Ascending aorta (tissue), 2 donors: ENCODE measurements at regions of chr1 and their contacts with region 1.

Region 1: GRCh38 chr1:55632058-55632457 is 416.9 kb upstream of the USP24 start:
- DNase-seq: no peak
- H3K4me3 ChIP-seq: no peak overlapping the region
- H3K27ac ChIP-seq: peak overlapping the region; percentile 63 to 66
- H3K4me1 ChIP-seq: peaks cover 20 to 42% of the 10 kb centered on the region in 2 donors
- H3K27me3 ChIP-seq: no peaks in the 10 kb centered on the region
- CTCF ChIP-seq: no peak

Region 2: DNA sequence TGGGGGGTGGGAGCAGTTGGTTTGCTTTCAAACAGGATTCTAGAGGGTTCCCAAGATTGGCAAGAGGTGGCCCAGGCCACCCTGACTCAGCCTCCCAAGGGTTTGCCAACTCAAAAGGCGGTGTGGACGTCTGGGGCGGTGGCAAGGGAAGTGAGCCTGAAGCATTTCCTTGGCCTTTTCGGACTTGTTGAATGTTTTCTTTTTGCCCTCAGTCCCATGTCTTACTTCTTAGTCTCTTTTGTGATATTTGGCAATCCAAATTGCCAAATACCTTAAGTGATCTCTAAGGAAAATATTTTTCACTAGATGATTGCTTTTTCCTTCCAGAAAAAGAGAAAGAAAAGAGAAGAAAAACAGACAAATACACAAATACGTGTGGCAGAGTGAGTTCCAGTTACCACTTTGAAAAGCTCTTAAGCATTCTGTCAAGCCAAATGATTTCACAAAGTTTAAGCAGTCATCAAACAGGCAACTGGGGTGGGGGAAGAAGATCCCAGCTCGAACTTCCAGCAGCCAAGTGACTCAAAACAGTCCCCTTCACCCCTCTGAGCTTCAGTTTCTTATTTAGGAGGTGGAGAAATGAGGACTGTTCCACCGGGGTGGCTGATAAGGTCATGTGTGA is 42.3 kb before region 1 on chr1:
- intact Hi-C with region 1: loop called (anchors 2 kb)
- DNase-seq: peak; percentile 22 to 89
- H3K4me3 ChIP-seq: no peak overlapping the region
- H3K27ac ChIP-seq: peak overlapping the region; percentile 86 to 88
- H3K4me1 ChIP-seq: peaks cover 13 to 38% of the 10 kb centered on the region in 2 donors
- H3K27me3 ChIP-seq: no peaks in the 10 kb centered on the region
- CTCF ChIP-seq: no peak

Region 3: GRCh38 chr1:55654750-55655149 is 22.7 kb after region 1 on chr1:
- intact Hi-C with region 1: loop called (anchors 2 kb)
- DNase-seq: no peak
- H3K4me3 ChIP-seq: no peak overlapping the region
- H3K27ac ChIP-seq: peak overlapping the region; percentile 70 to 83
- H3K4me1 ChIP-seq: peaks cover 0 to 7% of the 10 kb centered on the region in 2 donors
- H3K27me3 ChIP-seq: no peaks in the 10 kb centered on the region
- CTCF ChIP-seq: no peak